ENCODE measurements at regions of chr2 and their contacts with region 1.

Region 1: DNA sequence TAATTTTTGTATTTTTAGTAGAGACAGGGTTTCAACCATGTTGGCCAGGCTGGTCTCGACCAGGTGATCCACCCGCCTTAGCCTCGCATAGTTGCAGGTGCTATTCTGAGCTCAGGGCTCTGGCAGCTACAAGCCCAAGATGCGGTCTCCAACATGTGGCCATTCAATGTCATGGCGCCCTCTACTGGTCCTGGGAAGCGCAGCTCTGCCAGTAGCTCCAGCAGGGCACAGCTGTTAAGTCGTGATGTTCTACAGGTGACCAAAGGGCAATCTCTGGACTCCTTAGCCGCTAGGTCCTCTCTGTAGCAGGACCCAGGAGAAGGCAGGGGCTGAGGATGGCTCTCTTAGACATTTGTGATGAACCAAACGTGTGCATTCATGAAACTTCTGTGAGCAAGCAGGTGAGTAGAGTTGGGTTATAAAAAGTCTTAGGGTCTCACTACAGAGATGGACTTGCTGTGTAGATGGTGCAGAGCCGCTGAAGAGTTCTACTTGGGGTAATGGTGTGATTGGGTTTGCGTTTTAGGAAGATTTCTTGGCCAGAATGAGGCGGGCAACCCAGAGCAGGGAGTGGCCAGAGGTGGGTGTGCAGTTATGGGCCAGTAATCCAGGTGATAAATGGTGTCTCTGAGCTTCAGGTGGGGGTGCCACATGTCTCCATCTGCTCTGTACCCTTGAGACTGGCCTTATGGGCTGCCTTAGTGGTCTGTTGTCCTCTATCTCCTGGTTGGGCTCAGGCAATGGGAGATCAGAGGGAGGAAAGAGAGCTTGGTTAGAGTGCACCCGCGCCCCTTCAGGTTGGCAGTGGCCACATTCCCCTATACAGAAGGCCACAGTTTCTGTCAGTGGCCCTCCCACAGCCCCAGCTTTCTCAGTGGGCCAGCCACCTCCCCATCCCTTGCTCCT is 31.0 kb downstream of the IL37 start:
- DNase-seq: peak; percentile 14
- H3K4me3 ChIP-seq: no peak overlapping the region
- CTCF ChIP-seq: peak; percentile 95

Region 2: DNA sequence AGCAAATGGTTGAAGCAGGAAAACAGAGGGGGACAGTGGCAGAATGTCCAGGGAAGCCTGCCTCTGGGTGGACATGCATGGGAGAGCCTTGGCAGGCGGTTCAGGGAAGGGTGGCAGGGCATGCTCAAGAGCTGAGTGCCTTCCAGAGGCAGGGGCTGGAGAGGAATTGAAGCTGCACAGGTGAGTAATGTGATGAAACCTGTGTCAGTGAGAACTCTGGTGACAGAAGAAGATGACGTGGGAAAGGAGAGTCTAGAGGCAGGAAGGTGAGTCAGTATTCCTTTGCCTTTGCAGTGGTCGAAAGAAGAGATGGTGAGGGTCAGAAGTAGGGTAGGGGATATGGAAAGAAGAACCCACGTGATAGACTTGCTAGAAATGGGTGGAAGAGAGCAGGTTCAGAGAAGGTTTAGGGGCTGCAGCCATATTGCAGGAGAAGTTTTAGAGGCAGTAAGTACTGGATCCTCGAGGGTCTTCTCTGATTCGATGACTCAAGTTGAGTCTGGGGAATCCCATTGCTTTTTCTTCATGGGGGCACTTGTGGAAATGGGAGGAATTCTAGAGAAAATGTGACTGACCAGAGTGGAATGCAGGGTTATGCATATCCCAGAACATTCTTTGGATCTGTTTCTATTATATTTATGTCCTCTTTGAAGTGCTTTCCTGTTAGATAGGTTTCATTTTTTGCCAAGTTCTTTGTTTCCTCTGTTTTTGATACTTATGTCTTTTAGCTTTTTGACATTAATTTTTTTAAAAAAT is 849.5 kb before region 1 on chr2:
- CTCF ChIA-PET with region 1: no interaction called
- POLR2A ChIA-PET with region 1: no interaction called
- DNase-seq: peak; percentile 17
- H3K4me3 ChIP-seq: no peak overlapping the region
- CTCF ChIP-seq: no peak

Region 3: GRCh38 chr2:112764071-112765044 is 177.6 kb before region 1 on chr2 and contains the start of gene CKAP2L:
- CTCF ChIA-PET with region 1: interaction called, 49 read pairs
- POLR2A ChIA-PET with region 1: interaction called, 3 read pairs
- DNase-seq: peak; percentile 83
- H3K4me3 ChIP-seq: peak within 1 kb of the TSS; percentile 88
- CTCF ChIP-seq: no peak

Region 4: DNA sequence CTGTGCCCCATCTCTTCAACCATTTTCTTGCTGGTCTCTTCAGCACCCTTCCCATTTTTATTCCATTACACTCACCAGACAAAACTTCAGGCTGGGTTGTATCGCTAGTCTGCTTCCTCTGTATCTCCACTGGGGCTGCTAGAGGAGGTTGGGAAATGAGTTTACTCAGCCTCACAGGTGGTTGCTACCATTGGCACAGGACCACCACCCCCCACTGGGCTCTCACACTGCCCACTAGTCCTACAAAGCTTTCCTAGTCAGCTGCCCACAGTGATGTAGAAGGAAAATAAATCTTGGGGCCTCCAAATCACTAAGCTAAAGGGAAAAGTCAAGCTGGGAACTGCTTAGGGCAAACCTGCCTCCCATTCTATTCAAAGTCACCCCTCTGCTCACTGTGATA is 93.2 kb before region 1 on chr2:
- CTCF ChIA-PET with region 1: no interaction called
- POLR2A ChIA-PET with region 1: no interaction called
- DNase-seq: no peak
- H3K4me3 ChIP-seq: no peak overlapping the region
- CTCF ChIP-seq: no peak

Region 5: DNA sequence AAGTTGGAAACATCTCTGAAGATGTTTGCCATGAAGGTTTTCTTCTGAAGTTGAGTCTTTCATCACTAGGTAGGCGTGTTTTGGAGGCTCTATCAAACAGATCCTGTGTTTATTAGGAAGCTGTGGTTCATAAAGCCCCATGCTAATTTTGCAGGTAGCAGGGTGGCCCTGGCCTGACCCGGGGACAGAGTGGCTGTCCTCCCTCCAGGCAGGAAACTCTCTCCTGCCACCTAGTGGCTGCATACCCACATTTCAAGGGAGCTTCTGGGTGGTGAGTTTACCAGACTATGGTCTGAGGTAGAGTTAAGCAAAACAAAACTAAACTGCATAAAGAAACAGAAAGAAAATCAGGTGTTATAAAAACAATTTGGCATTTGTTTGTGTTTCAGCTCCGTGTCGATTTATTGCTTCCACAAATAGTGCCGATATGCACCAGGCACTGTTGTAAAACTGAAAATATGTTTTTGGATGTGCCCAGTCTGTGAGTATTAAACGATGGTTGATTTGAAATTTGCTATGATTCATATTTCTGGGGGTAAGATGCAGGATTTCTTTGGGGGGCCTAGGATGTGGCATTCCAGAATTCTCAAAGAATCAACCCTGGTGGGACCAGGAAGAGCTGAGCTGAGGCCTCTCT is 57.0 kb before region 1 on chr2:
- CTCF ChIA-PET with region 1: interaction called, 12 read pairs
- POLR2A ChIA-PET with region 1: no interaction called
- DNase-seq: no peak
- H3K4me3 ChIP-seq: no peak overlapping the region
- CTCF ChIP-seq: peak; percentile 51

Region 6: GRCh38 chr2:112904883-112905282 is 37.1 kb before region 1 on chr2:
- CTCF ChIA-PET with region 1: interaction called, 11 read pairs
- POLR2A ChIA-PET with region 1: no interaction called
- DNase-seq: no peak
- H3K4me3 ChIP-seq: no peak overlapping the region
- CTCF ChIP-seq: no peak

Region 7: DNA sequence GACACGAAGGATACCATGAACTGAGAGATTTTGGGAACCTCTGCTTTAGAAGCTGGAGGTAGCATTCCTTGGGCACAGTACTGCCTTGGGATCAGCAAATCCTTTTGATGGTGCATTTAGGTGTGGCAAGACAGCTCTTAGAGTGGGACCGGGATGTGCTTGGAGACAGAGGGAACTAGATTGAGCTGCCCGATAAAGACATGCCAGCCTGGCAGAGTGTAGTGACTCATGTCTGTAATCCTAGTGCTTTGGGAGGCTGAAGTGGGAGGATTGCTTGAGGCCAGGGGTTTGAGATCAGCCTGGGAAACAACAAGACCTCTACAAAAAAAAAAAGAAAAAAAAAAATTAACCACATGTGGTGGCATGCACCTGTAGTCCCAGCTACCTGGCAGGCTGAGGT is 13.2 kb before region 1 on chr2:
- CTCF ChIA-PET with region 1: interaction called, 70 read pairs
- POLR2A ChIA-PET with region 1: no interaction called
- DNase-seq: no peak
- H3K4me3 ChIP-seq: no peak overlapping the region
- CTCF ChIP-seq: no peak

Measured in AG04449 (cell line).